Heart left ventricle (tissue), 16 donors: ENCODE measurements at regions of chr18 and their contacts with region 1.

Region 1: GRCh38 chr18:53883771-53884170 is 340.7 kb downstream of the MBD2 start:
- DNase-seq: no peak
- ATAC-seq: no peak
- H3K4me3 ChIP-seq: no peak overlapping the region
- H3K27ac ChIP-seq: no peak overlapping the region
- H3K4me1 ChIP-seq: no peaks in the 10 kb centered on the region
- H3K27me3 ChIP-seq: no peaks in the 10 kb centered on the region
- CTCF ChIP-seq: no peak
- POLR2A ChIP-seq: no peak

Region 2: GRCh38 chr18:53800171-53800570 is 83.6 kb before region 1 on chr18:
- intact Hi-C with region 1: loop called in 1 of 10 experiments (anchors 2 kb)
- DNase-seq: no peak
- ATAC-seq: no peak
- H3K4me3 ChIP-seq: no peak overlapping the region
- H3K27ac ChIP-seq: no peak overlapping the region
- H3K4me1 ChIP-seq: peaks cover 0 to 6% (median 0%) of the 10 kb centered on the region in 12 donors
- H3K27me3 ChIP-seq: no peaks in the 10 kb centered on the region
- CTCF ChIP-seq: no peak
- POLR2A ChIP-seq: no peak